ENCODE measurements at regions of chr6 and their contacts with region 1.

Region 1: DNA sequence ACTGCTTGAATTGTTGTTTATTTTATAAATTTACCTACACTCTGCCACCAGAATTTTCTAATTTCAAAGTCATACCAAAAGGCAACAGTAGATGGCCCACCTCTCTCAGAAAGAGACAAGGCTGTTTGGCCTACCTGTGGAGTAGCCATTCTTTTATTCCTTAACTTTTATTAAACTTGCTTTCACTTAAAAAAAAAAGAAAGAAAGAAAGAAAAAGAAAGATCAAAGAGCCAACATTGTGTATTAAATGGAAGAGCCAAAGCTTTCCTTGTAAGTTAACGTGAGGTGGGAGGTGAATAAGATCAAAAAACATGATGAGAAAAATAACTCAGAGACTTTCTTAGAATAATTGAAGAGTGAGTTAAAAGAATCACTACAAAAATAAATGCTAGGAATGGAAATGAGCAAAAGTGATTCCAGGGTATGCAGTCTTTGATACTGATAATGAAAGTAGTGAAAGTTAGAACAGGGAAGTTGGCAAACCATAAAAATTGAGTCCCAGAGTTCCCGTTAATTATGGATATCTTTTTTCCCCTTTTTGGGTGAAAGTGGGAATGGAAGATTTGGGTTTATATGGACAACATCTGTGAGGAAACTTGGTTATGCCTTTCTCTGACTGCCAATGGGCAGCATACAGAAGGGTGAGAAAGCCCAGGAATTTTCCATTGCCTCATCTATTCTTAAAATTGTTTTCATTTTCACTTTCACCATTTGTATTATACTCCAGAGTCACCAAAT is 35.9 kb upstream of the MYB start:
- DNase-seq: peak; percentile 45
- ATAC-seq: peak; percentile 62
- H3K4me3 Mint-ChIP-seq: peak overlapping the region; percentile 27
- H3K27ac Mint-ChIP-seq: peak overlapping the region; percentile 95
- H3K4me1 Mint-ChIP-seq: peaks cover 76% of the 10 kb centered on the region
- H3K27me3 Mint-ChIP-seq: no peaks in the 10 kb centered on the region
- CTCF ChIP-seq: peak; percentile 90

Region 2: DNA sequence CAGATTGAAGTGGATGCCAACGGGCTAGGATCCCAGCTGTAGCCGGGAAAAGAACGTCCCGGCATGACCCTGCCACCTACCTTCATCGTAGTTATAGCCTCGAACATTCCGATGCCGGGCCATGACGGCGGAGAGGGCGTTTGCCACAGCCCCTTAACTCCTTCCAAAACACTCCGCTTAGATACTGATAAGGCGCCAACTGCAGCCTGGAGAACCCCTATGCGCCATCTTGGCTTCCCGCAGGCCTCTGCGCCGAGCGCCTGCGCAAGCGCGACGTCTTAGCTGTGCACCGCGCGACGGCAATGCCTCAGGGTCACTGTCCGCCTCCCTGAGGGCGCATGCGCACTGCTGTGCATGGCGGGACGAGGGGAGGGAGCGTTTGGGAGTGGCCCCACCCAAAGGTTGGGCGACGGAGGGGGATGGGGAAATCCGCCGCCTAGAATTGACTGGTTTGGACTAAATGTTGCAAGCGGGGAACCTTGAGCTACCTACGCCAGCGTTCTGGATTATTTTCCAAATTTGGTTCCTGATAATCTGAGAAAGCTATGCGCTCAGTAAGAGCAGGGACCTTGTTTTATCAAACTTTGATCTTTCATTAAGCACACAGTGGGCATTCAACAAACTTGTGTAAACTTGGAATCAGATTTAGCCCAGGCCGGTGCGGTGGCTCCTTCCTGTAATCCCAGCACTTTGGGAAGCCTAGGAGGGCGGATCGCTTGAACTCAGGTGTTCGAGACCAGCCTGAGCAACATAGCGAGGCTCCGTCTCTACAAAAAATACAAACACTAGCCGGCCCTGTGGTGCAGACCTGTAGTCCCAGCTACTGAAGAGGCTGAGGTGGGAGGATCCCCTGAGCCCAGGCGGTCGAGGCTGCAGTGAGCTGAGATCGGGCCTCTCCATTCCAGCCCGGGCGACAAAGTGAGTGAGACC is 90.4 kb before region 1 on chr6 and contains the start of gene HBS1L:
- CTCF ChIA-PET with region 1: interaction called, 18 read pairs
- POLR2A ChIA-PET with region 1: interaction called, 5 read pairs
- intact Hi-C with region 1: no loop called
- DNase-seq: peak; percentile 98
- ATAC-seq: peak; percentile 97
- H3K4me3 Mint-ChIP-seq: peak within 1 kb of the TSS; percentile 96
- H3K27ac Mint-ChIP-seq: peak within 1 kb of the TSS; percentile 99
- H3K4me1 Mint-ChIP-seq: peaks cover 25% of the 10 kb centered on the region
- H3K27me3 Mint-ChIP-seq: no peaks in the 10 kb centered on the region
- CTCF ChIP-seq: no peak
- total RNA-seq, gene HBS1L: 146 to 147 TPM

Region 3: DNA sequence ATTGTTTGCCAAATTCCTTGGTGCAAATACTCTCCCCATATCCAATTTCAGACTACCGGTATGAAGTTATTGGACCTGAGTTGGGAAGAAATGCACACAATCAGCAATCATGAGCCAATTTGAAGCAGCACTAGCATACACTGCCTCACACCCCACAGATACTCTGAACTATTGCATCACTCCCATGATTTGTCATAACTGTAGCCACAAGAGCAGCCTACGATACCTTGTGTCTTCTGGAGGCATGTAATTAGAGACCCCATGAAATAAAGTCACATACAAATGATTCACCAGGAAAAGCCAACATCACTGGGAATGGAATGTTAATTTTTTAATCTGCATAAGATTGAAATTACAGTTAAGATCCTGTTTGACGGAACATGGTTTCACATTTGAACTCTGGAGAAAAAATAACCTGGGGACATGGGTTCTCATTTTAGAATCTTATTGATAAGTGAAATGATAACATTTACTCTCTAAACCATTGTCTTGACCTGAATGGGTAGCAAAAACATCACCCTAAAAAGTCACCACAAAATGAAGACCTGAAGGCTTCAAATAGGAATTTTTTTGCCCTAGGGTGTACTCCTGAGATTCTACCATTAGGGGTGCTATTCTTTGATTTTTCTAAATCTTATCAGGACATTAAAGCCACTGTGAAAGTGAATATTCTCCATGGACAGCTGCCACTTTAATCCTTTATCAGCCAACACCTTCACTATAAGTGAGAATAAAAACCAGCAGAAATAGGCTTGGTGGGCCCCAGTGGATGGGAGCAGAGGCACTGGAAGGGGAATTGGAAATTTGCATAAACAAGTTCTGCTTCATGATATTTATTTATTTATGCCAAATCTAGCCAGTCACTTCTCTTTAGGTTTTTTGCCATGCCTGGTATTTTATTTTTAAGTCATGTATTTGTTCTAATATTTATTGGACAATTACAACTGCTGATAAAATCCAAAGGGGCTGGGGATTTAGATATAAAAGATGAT is 56.1 kb before region 1 on chr6:
- CTCF ChIA-PET with region 1: interaction called, 53 read pairs
- POLR2A ChIA-PET with region 1: interaction called, 5 read pairs
- intact Hi-C with region 1: loop called (anchors 5 kb)
- DNase-seq: peak; percentile 67
- ATAC-seq: peak; percentile 78
- H3K4me3 Mint-ChIP-seq: peak overlapping the region; percentile 43
- H3K27ac Mint-ChIP-seq: peak overlapping the region; percentile 89
- H3K4me1 Mint-ChIP-seq: peaks cover 86% of the 10 kb centered on the region
- H3K27me3 Mint-ChIP-seq: no peaks in the 10 kb centered on the region
- CTCF ChIP-seq: peak; percentile 93

Region 4: GRCh38 chr6:135108692-135109091 is 36.5 kb before region 1 on chr6:
- CTCF ChIA-PET with region 1: no interaction called
- POLR2A ChIA-PET with region 1: no interaction called
- intact Hi-C with region 1: no loop called
- DNase-seq: no peak
- ATAC-seq: no peak
- H3K4me3 Mint-ChIP-seq: no peak overlapping the region
- H3K27ac Mint-ChIP-seq: no peak overlapping the region
- H3K4me1 Mint-ChIP-seq: peaks cover 50% of the 10 kb centered on the region
- H3K27me3 Mint-ChIP-seq: no peaks in the 10 kb centered on the region
- CTCF ChIP-seq: no peak

Region 5: GRCh38 chr6:135128268-135128914 is 16.8 kb before region 1 on chr6:
- CTCF ChIA-PET with region 1: interaction called, 23 read pairs
- POLR2A ChIA-PET with region 1: interaction called, 17 read pairs
- intact Hi-C with region 1: no loop called
- DNase-seq: peak; percentile 88
- ATAC-seq: peak; percentile 91
- H3K4me3 Mint-ChIP-seq: peak overlapping the region; percentile 52
- H3K27ac Mint-ChIP-seq: peak overlapping the region; percentile 97
- H3K4me1 Mint-ChIP-seq: peaks cover 56% of the 10 kb centered on the region
- H3K27me3 Mint-ChIP-seq: no peaks in the 10 kb centered on the region
- CTCF ChIP-seq: no peak

Region 6: DNA sequence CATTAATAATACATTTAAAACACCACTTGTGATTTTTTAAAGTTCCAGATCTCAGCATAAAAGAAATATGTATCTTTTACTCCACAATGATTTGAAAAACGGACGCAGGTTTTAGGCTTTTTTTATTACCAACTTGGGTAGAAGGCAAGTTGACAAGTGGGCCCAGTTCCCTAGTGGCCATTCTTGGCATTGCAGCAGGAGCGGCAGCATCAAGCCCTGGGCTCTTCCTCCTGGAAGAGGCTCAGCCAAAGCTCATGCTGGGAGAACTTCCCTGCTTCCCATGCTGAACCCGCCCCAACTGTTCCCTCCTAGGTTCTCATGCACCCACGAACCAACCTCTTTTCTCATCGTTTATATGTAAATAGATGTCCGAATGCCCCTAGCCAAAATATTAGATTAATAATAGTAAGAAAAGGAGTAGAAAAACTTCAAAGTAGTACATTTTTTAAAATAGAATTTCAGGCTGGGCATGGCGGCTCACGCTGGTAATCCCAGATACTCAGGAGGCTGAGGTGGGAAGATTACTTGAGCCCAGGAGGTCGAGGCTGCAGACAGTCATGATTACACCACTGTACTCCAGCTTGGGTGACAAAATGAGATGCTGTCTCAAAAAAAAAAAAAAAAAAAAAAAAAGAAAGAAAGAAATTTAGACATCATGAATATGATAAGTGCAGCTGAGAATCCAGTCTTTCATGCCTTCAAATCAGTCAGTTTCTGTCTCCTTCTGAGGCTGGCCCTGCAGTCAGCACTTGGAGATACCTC is 17.6 kb after region 1 on chr6:
- CTCF ChIA-PET with region 1: interaction called, 26 read pairs
- POLR2A ChIA-PET with region 1: interaction called, 14 read pairs
- intact Hi-C with region 1: loop called (anchors 2 kb)
- DNase-seq: peak; percentile 66
- ATAC-seq: no peak
- H3K4me3 Mint-ChIP-seq: peak overlapping the region; percentile 51
- H3K27ac Mint-ChIP-seq: peak overlapping the region; percentile 97
- H3K4me1 Mint-ChIP-seq: peaks cover 61% of the 10 kb centered on the region
- H3K27me3 Mint-ChIP-seq: no peaks in the 10 kb centered on the region
- CTCF ChIP-seq: peak; percentile 98

Measured in activated CD8-positive, alpha-beta T cell treated with anti-CD3 and anti-CD28 coated beads for 36 hours (primary cell).